Right ventricle myocardium inferior (tissue), 1 donor: ENCODE measurements at regions of chr18 and their contacts with region 1.

Region 1: DNA sequence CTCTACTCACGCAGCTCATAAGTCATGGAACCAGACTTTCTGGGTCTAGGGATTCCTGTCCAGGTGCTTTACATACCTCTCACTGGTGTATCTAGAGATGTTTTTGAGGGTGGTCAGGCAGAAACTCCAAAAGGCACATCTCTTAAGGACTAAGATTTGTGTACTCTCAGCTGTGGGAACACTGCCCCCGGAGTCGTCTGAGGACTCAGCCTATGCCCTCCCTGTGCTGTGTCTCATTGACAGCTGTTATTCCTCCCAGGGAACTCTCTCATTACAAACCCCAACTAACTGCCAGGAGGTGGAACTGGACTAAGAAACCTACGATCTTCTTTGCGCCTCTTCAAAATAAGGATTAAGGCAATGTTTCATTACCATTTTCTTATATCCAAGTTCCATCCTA is 293.9 kb upstream of the DLGAP1 start:
- DNase-seq: no peak
- ATAC-seq: no peak

Region 2: DNA sequence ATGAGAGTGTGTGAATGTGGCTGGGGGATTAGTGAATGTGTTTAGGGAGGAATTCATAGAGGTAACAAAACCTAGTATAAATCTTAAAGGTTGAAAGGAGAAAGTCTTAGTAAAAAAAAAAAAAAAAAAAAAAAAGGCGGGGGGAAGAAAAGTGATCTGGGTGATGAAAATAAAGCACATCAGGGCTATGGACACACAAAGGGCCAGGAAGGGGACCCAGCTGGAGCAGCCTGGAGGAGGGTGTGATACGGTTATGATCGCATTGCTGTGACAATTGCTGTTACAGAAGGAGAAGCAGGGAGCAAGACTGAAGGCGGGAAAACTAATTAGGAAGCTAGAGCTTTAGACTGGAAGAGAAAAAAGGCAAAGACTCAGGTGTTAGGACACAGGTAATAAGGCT is 379.3 kb before region 1 on chr18:
- intact Hi-C with region 1: loop called (anchors 10 kb)
- DNase-seq: no peak
- ATAC-seq: no peak